ENCODE measurements at regions of chr13 and their contacts with region 1.

Region 1: DNA sequence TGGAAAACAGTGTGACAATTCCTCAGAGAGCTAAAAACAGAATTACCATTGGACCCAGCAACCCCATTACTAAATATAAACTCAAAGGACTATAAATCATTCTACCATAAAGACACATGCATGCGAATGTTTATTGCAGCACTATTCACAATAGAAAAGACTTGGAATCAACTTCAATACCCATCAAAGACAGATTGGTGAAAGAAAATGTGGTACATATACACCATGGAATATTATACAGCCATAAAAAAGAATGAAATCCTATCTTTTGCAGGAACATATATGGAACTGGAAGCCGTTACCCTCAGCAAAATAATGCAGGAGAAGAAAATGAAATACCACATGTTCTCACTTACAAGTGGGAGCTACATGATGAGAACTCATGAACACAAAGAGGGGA is 20.8 kb upstream of the FGF14 start:
- DNase-seq: no peak
- ATAC-seq: no peak
- H3K4me3 ChIP-seq: no peak overlapping the region
- H3K4me3 Mint-ChIP-seq: no peak overlapping the region
- H3K27ac ChIP-seq: no peak overlapping the region
- H3K27ac Mint-ChIP-seq: no peak overlapping the region
- H3K4me1 ChIP-seq: no peaks in the 10 kb centered on the region
- H3K4me1 Mint-ChIP-seq: no peaks in the 10 kb centered on the region
- H3K27me3 ChIP-seq: no peaks in the 10 kb centered on the region
- H3K27me3 Mint-ChIP-seq: peaks cover 3% of the 10 kb centered on the region
- CTCF ChIP-seq: no peak

Region 2: DNA sequence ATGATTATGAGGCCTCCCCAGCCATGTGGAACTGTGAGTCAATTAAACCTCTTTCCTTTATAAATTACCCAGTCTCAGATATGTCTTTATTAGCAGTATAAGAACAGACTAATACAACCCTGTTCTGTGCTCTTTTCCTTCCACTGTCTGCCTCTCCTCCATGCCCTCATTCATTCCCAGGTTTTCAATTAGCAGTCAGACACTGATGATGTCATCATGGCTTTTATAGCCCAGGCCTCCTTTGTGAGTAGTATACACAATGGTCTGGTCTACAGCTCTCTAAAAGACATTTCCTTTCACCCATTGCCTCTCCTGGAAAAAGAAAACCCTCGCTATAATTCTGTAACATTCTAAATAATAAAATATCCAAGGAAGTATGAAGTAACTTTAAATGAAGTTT is 46.4 kb before region 1 on chr13:
- CTCF ChIA-PET with region 1: no interaction called
- POLR2A ChIA-PET with region 1: no interaction called
- intact Hi-C with region 1: no loop called
- DNase-seq: no peak
- ATAC-seq: no peak
- H3K4me3 ChIP-seq: no peak overlapping the region
- H3K4me3 Mint-ChIP-seq: no peak overlapping the region
- H3K27ac ChIP-seq: no peak overlapping the region
- H3K27ac Mint-ChIP-seq: no peak overlapping the region
- H3K4me1 ChIP-seq: no peaks in the 10 kb centered on the region
- H3K4me1 Mint-ChIP-seq: no peaks in the 10 kb centered on the region
- H3K27me3 ChIP-seq: no peaks in the 10 kb centered on the region
- H3K27me3 Mint-ChIP-seq: peaks cover 7% of the 10 kb centered on the region
- CTCF ChIP-seq: no peak

Region 3: GRCh38 chr13:102440259-102440936 is 17.7 kb after region 1 on chr13:
- CTCF ChIA-PET with region 1: no interaction called
- POLR2A ChIA-PET with region 1: no interaction called
- intact Hi-C with region 1: no loop called
- DNase-seq: no peak
- ATAC-seq: no peak
- H3K4me3 ChIP-seq: no peak overlapping the region
- H3K4me3 Mint-ChIP-seq: no peak overlapping the region
- H3K27ac ChIP-seq: no peak overlapping the region
- H3K27ac Mint-ChIP-seq: no peak overlapping the region
- H3K4me1 ChIP-seq: no peaks in the 10 kb centered on the region
- H3K4me1 Mint-ChIP-seq: no peaks in the 10 kb centered on the region
- H3K27me3 ChIP-seq: peaks cover 0 to 4% of the 10 kb centered on the region in 2 experiments
- H3K27me3 Mint-ChIP-seq: peaks cover 28% of the 10 kb centered on the region
- CTCF ChIP-seq: no peak

Region 4: GRCh38 chr13:102466610-102467190 is 44.0 kb after region 1 on chr13:
- CTCF ChIA-PET with region 1: no interaction called
- POLR2A ChIA-PET with region 1: no interaction called
- intact Hi-C with region 1: loop called in 1 of 2 experiments (anchors 1 kb)
- DNase-seq: no peak
- ATAC-seq: no peak
- H3K4me3 ChIP-seq: no peak overlapping the region
- H3K4me3 Mint-ChIP-seq: no peak overlapping the region
- H3K27ac ChIP-seq: no peak overlapping the region
- H3K27ac Mint-ChIP-seq: no peak overlapping the region
- H3K4me1 ChIP-seq: no peaks in the 10 kb centered on the region
- H3K4me1 Mint-ChIP-seq: no peaks in the 10 kb centered on the region
- H3K27me3 ChIP-seq: no peaks in the 10 kb centered on the region
- H3K27me3 Mint-ChIP-seq: peaks cover 33% of the 10 kb centered on the region
- CTCF ChIP-seq: no peak

Measured in CD8-positive, alpha-beta T cell (primary cell).